Heart left ventricle (tissue), 16 donors: ENCODE measurements at regions of chr12 and their contacts with region 1.

Region 1: GRCh38 chr12:64669270-64669842 is 59.1 kb downstream of the RASSF3 start:
- DNase-seq: peak; percentile 64 to 80 (median 68)
- ATAC-seq: peak; percentile 39 to 71 (median 48)
- H3K4me3 ChIP-seq: peak overlapping the region in 5 of 12 donors; percentile 0 to 25 (median 4)
- H3K27ac ChIP-seq: peak overlapping the region; percentile 48 to 89 (median 76)
- H3K4me1 ChIP-seq: peaks cover 18 to 100% (median 93%) of the 10 kb centered on the region in 12 donors
- H3K27me3 ChIP-seq: no peaks in the 10 kb centered on the region
- CTCF ChIP-seq: no peak
- POLR2A ChIP-seq: no peak

Region 2: DNA sequence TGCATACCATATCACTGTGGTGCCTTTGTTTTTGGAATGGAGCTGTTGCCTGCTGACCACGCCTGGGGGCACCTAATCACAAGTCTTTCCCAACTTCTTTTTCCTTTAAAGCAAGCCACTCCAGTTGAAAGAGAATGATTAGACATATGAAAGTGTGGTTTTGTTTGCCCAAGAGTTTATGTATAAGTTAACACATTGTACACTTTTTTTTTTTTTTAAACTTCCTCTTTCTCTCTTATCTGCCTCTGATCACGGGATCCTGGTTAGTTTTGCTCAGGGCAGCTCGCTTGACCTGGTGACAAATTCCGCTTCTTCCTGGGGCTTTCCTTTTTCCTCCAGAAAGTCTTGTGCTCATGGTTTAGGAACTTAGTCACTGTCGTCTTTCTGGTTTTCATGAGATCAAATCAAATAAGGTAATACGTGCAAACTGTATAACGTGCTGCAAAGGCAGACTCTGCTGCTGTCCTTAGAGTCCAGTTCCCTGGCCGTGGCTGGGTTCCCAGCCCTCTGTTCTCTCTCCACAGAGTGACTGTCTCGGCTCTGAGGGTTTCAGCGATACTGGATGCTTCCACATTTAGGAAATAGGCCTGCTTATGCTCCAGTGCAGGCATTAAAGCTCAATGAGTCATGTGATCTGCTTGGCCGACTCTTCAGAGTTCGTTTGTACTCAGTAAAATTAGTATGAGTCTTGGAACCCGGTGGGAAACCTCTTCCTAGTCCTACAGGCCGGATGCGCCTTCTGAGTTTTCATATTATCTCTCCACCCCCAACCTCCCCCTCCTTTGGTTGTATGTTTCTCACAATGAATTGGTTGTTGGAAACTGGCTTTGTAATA is 43.9 kb before region 1 on chr12:
- intact Hi-C with region 1: loop called in 2 of 10 experiments (anchors 5 kb)
- DNase-seq: peak; percentile 70 to 83 (median 78)
- ATAC-seq: peak; percentile 92 to 98 (median 96)
- H3K4me3 ChIP-seq: peak overlapping the region in 10 of 12 donors; percentile 3 to 46 (median 36)
- H3K27ac ChIP-seq: peak overlapping the region; percentile 62 to 93 (median 84)
- H3K4me1 ChIP-seq: peaks cover 3 to 84% (median 46%) of the 10 kb centered on the region in 12 donors
- H3K27me3 ChIP-seq: no peaks in the 10 kb centered on the region
- CTCF ChIP-seq: no peak
- POLR2A ChIP-seq: peak in 1 of 2 donors; percentile 28